OCI-LY7 (cell line): ENCODE measurements at regions of chr6 and their contacts with region 1.

Region 1: GRCh38 chr6:152948150-152948768 is 34.6 kb downstream of the FBXO5 start:
- DNase-seq: peak; percentile 53
- H3K4me3 ChIP-seq: no peak overlapping the region
- H3K27ac ChIP-seq: no peak overlapping the region
- H3K4me1 ChIP-seq: no peaks in the 10 kb centered on the region
- CTCF ChIP-seq: peak; percentile 88

Region 2: DNA sequence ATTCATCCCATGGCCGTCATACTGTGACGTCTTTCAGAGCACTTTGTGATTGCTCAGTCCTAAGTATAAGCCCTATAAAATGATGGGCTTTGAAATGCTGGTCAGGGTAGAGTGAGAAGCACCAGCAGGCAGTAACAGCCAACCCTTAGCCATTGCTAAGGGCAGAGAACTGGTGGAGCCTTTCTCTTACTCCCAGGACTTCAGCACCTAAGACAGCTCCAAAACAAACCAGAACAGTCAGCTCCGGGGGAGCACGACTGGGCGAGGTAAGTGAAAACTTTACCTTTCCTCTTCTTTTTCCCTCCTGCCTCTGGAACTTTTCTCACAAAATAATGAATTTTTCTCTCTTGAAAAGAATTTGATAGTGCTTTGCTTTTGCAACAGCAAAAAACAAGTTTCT is 197.6 kb before region 1 on chr6 and contains the start of gene VIP:
- CTCF ChIA-PET with region 1: no interaction called
- POLR2A ChIA-PET with region 1: interaction called, 3 read pairs
- intact Hi-C with region 1: loop called (anchors 5 kb)
- DNase-seq: peak; percentile 10
- H3K4me3 ChIP-seq: no peak within 1 kb of the TSS
- H3K27ac ChIP-seq: no peak within 1 kb of the TSS
- H3K4me1 ChIP-seq: no peaks in the 10 kb centered on the region
- CTCF ChIP-seq: no peak
- total RNA-seq, gene VIP: not detected in 2 replicates

Region 3: GRCh38 chr6:152863618-152864326 is 84.5 kb before region 1 on chr6:
- CTCF ChIA-PET with region 1: no interaction called
- POLR2A ChIA-PET with region 1: interaction called, 3 read pairs
- intact Hi-C with region 1: loop called (anchors 1 kb)
- DNase-seq: peak; percentile 73
- H3K4me3 ChIP-seq: no peak overlapping the region
- H3K27ac ChIP-seq: no peak overlapping the region
- H3K4me1 ChIP-seq: no peaks in the 10 kb centered on the region
- CTCF ChIP-seq: peak; percentile 91